ENCODE measurements at regions of chr12 and their contacts with region 1.

Region 1: DNA sequence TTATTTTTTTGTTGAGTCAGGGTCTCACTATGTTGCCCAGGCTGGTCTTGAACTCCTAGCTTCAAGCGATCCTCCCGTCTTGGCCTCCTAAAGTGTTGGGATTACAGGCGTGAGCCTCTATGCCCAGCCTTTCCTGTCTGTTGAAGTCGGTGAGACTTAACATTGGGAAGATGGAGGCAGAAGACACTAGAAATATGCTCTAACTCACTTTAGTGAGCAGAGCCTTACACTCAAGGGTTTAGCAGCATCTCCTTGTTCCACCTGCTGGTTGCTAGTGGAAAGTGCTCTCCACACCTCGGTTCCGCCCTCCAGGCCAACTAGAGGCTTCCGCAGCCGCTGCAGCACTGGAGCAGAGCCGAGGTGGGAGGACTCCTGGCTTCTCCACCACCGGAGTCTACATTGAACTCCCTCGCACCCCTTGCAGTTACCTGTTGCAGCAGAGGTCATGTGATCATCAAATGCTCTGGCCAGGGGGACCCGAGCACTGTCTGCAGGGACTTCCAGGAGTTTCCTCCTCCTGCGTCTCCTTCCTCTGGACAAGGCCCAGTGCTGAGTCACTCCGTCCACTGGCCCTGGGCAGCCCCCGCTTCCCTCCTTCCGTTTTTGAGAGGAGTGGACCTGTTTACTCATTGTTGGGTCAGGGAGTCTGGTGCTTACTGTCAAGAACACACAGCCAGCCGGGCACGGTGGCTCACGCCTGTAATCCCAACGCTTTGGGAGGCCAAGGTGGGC is 9.4 kb upstream of the HVCN1 start:
- DNase-seq: peak; percentile 88
- H3K4me3 Mint-ChIP-seq: no peak overlapping the region
- H3K27ac Mint-ChIP-seq: no peak overlapping the region
- H3K4me1 Mint-ChIP-seq: peaks cover 5% of the 10 kb centered on the region
- H3K27me3 Mint-ChIP-seq: no peaks in the 10 kb centered on the region

Region 2: DNA sequence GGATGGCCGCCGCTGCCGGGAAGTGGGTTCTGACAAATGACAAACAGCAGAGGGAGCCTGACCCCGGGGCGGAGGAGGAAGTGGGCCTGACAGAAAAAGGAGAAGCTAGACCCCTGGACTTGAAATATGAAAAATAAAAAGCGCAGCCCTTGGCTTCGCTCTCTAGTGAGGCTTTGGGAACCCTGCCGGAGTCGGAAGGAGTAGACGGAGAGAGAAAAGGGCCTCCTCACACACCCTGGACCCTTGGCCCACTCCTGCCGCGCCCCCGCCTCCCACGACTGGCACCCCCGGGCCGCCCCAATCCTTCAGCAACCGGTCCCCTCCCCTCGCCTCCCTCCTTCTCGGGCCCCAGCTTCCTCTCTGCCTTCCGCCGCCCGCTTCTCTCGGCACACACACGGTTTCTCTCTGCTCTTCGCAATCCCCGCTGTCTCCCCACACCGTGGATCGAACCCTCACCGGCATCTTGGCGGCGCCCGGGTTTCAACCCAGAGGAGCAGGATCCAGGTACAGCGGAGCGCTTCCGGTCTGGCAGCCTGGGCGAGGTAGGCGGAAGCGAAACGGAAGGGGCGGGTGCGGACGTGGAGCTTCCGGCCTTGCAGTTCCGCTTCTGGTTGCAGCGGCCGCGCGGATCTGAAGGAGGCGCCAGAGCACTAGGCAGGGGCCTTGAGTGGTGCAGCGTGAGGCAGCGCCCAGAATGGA is 248.4 kb before region 1 on chr12 and contains the start of gene ARPC3:
- CTCF ChIA-PET with region 1: interaction called, 4 read pairs
- POLR2A ChIA-PET with region 1: no interaction called
- intact Hi-C with region 1: loop called (anchors 5 kb)
- DNase-seq: peak; percentile 97
- H3K4me3 Mint-ChIP-seq: peak within 1 kb of the TSS; percentile 100
- H3K27ac Mint-ChIP-seq: peak within 1 kb of the TSS; percentile 99
- H3K4me1 Mint-ChIP-seq: peaks cover 35% of the 10 kb centered on the region
- H3K27me3 Mint-ChIP-seq: no peaks in the 10 kb centered on the region
- total RNA-seq, gene ARPC3: 340 to 352 TPM

Region 3: GRCh38 chr12:110513842-110514241 is 184.5 kb before region 1 on chr12:
- CTCF ChIA-PET with region 1: no interaction called
- POLR2A ChIA-PET with region 1: no interaction called
- intact Hi-C with region 1: loop called (anchors 2 kb)
- DNase-seq: no peak
- H3K4me3 Mint-ChIP-seq: no peak overlapping the region
- H3K27ac Mint-ChIP-seq: no peak overlapping the region
- H3K4me1 Mint-ChIP-seq: no peaks in the 10 kb centered on the region
- H3K27me3 Mint-ChIP-seq: no peaks in the 10 kb centered on the region

Region 4: DNA sequence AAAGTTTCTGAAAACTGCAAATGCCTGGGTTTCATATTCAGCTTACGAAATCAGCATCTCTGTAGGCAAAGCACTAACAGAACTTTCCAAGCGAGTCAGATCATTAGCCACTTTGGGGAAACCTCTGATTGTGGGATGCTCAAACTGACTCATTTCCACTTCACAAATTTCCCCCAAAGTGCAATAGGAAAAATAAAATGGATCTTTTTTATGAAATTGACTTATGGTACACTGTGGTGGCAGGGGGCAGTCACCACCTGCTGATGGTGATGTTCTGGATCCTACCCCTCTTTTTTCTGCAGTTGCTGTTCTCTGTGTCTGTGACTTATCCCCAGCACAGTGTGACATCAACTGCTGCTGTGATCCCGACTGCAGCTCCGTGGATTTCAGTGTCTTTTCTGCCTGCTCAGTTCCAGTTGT is 78.8 kb before region 1 on chr12:
- CTCF ChIA-PET with region 1: interaction called, 11 read pairs
- POLR2A ChIA-PET with region 1: no interaction called
- intact Hi-C with region 1: loop called (anchors 1 kb)
- DNase-seq: peak; percentile 69
- H3K4me3 Mint-ChIP-seq: no peak overlapping the region
- H3K27ac Mint-ChIP-seq: peak overlapping the region; percentile 71
- H3K4me1 Mint-ChIP-seq: peaks cover 15% of the 10 kb centered on the region
- H3K27me3 Mint-ChIP-seq: no peaks in the 10 kb centered on the region

Region 5: GRCh38 chr12:110661337-110661972 is 36.9 kb before region 1 on chr12:
- CTCF ChIA-PET with region 1: no interaction called
- POLR2A ChIA-PET with region 1: no interaction called
- intact Hi-C with region 1: no loop called
- DNase-seq: peak; percentile 60
- H3K4me3 Mint-ChIP-seq: peak overlapping the region; percentile 8
- H3K27ac Mint-ChIP-seq: peak overlapping the region; percentile 67
- H3K4me1 Mint-ChIP-seq: peaks cover 16% of the 10 kb centered on the region
- H3K27me3 Mint-ChIP-seq: no peaks in the 10 kb centered on the region

Measured in activated CD4-positive, alpha-beta memory T cell treated with anti-CD3 and anti-CD28 coated beads for 36 hours (primary cell).